IMR-90 (cell line): ENCODE measurements at regions of chr11 and their contacts with region 1.

Region 1: GRCh38 chr11:65900125-65900898 is at the start of gene FOSL1:
- DNase-seq: peak; percentile 97
- ATAC-seq: peak; percentile 78
- H3K4me3 ChIP-seq: peak within 1 kb of the TSS; percentile 98
- H3K27ac ChIP-seq: peak within 1 kb of the TSS; percentile 100
- H3K4me1 ChIP-seq: peaks cover 38% of the 10 kb centered on the region
- H3K27me3 ChIP-seq: no peaks in the 10 kb centered on the region
- CTCF ChIP-seq: no peak
- POLR2A ChIP-seq: peak; percentile 99
- RAD21 ChIP-seq: 0 out of 2 replicates have a peak, but pooled peaks have one; percentile 1
- total RNA-seq, gene FOSL1: 17.2 and 26.1 TPM in 2 replicates

Region 2: DNA sequence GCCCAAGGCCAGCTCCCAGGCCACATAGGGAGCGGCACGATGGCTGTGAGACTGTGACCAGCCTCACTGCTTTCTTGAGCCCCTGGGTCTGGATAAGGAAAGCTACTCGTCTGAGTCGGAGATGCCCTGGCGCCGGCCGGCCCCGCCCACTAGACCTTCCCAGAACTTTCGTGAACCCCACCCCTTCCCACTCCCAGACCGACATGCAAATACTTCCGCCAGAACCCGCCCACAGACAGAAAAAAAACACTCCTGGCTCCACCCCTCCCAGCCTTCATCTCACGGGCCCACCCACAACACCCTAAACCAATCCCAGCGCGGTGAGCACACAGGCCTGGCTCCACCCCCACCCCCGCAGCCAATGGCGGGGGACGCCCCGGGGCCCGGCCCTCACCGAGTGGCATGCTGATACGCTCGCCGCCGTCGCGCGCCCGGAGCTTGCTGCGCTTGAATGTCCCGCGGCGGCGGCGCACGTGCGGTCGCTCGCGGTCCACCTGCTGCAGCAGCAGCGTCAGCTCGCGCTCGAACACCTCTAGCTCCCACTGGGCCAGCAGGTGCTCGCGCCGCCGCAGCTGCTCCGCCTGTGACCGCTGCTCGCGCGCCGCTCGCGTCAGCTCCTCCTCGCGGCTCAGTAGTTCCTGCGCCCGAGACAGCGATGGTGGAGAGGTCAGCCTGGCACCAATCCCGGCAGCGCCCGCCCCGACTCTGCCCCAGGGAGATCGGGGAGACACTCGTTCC is 293.3 kb before region 1 on chr11:
- CTCF ChIA-PET with region 1: no interaction called
- POLR2A ChIA-PET with region 1: interaction called, 10 read pairs
- dilution Hi-C with region 1: no loop called
- in situ Hi-C with region 1: no loop called
- intact Hi-C with region 1: no loop called
- DNase-seq: peak; percentile 93
- ATAC-seq: peak; percentile 100
- H3K4me3 ChIP-seq: peak overlapping the region; percentile 20; the same call in 1 of the 2 replicates
- H3K27ac ChIP-seq: no peak overlapping the region
- H3K4me1 ChIP-seq: peaks cover 9% of the 10 kb centered on the region
- H3K27me3 ChIP-seq: no peaks in the 10 kb centered on the region
- CTCF ChIP-seq: no peak
- POLR2A ChIP-seq: no peak
- RAD21 ChIP-seq: no peak

Region 3: DNA sequence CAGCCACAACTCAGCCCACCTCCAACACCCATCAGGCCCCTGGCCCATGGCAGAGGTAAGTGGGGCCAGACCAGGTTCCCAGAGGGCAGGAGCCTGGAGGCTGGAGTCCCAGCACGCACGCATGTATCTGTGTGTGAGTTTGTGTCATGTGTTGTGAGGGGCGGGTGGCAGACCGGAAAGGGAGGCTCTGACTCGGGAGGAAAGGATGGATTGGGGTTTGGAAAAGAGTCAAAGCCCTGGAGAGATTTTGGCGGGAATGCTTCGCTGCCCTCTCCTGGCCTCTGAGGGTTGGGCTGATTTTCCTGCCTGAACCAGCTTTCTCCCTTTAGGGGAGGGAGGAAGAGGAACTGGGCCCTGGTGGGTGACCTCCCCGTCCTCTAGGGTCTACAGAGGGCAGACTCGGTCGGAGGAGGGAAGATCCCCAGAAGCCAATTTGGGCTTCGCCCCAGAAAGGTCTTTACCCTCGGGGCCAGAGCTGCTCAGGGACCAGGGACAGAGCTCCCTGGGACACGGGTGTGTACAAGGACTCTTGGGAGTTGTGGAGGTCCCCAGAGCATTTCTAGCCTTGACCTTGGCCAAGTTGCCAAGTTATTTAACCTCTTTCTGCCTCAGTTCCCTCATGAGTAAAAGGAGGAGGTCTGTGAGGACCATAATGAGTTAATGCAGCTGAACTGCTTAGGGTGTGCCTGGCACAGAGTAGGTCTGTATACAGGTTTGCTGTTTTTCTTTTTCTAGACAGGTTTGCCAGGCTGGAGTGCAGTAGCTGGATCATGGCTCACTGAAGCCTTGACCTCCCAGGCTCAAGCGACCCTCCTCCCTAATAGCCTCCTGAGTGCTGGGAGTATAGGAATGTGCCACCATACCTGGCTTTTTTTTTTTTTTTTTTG is 11.6 kb after region 1 on chr11:
- CTCF ChIA-PET with region 1: no interaction called
- POLR2A ChIA-PET with region 1: interaction called, 17 read pairs
- dilution Hi-C with region 1: no loop called
- in situ Hi-C with region 1: no loop called
- intact Hi-C with region 1: loop called (anchors 1 kb)
- DNase-seq: peak; percentile 87
- ATAC-seq: peak; percentile 15
- H3K4me3 ChIP-seq: no peak overlapping the region
- H3K27ac ChIP-seq: peak overlapping the region; percentile 88
- H3K4me1 ChIP-seq: peaks cover 43% of the 10 kb centered on the region
- H3K27me3 ChIP-seq: no peaks in the 10 kb centered on the region
- CTCF ChIP-seq: peak; percentile 46
- POLR2A ChIP-seq: peak; percentile 68
- RAD21 ChIP-seq: peak; percentile 44; the same call in 1 of the 2 replicates